Right lobe of liver (tissue), 6 donors: ENCODE measurements at regions of chr15 and their contacts with region 1.

Region 1: DNA sequence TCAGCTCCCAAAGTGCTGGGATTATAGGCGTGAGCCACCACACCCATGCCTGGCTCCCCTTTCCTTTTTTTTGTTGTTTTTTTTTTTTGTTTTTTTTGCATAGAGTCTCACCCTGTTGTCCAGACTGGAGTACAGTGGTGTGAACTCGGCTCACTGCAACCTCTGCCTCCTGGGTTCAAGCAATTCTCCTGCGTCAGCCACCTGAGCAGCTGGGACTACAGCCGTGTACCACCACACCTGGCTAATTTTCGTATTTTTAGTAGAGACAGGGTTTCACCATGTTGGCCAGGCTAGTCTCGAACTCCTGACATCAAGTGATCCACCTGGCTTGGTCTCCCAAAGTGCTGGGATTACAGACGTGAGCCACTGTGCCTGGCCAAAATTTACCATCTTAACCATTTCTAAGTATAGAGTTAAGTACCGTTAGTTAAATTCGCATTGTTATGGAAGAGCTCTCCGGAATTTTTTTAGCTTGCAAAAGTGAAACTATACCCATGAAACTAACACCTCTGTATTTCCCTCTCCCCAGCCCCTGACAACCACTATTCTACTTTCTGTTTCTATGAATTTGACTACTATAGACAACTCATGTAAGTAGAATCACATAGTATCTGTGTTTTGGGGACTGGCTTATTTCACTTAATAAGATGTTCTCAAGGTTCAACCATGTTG is 70.9 kb upstream of the C15orf39 start:
- DNase-seq: no peak
- ATAC-seq: peak in 3 of 4 donors; percentile 42 to 69 (median 49)
- H3K4me3 ChIP-seq: no peak overlapping the region
- H3K27ac ChIP-seq: no peak overlapping the region
- H3K4me1 ChIP-seq: no peaks in the 10 kb centered on the region
- H3K27me3 ChIP-seq: no peaks in the 10 kb centered on the region
- CTCF ChIP-seq: no peak
- POLR2A ChIP-seq: no peak

Region 2: DNA sequence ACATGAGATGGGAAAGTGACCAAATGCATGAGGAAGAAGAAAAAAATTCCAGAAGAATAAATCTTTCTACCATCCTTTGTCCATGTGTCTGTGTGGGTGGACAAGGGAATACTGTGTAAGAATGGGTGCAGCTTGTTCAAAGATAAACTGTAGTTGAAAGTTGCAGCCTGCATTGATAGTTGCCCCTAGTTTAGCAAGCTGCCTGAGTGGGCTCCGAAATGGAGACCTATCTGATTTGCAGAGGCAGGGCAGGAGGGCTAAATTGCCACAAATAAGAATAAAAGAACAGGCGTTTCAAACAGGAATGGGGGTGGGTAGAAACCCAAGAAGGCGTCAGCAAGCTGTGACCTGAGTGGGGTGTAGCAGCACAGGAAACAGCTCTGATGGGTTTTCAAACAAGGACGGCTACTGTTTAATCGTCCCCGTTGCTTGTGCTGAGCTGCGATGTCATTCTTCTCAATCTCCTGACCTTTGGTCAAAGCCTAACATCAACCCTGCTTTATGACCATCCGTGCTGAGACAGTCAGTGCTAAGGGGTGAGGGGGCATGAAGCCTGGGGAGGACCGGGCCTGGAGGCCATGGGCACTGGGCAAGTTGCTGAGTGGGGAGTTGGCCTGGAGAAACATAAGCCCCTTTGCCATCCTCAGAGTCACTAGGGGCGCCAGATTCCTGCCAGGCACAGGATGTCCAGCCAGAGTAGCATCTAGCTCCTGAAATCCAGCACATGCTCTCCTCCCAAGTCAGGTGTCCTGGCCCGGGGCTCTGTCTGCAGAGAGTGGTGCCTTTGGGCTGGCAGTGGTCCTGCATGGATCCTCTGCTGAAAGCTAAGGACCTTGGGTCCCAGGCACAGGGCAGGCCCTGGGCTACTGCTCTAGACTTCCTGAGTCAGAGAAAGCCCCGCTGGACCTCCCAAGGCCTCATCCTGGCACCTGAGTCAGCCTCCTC is 51.7 kb after region 1 on chr15:
- intact Hi-C with region 1: loop called in 1 of 2 experiments (anchors 10 kb)
- DNase-seq: no peak
- ATAC-seq: peak in 2 of 4 donors; percentile 9 to 40
- H3K4me3 ChIP-seq: no peak overlapping the region
- H3K27ac ChIP-seq: no peak overlapping the region
- H3K4me1 ChIP-seq: peaks cover 0 to 6% (median 0%) of the 10 kb centered on the region in 4 donors
- H3K27me3 ChIP-seq: no peaks in the 10 kb centered on the region
- CTCF ChIP-seq: no peak
- POLR2A ChIP-seq: no peak